ENCODE measurements at regions of chr1 and their contacts with region 1.

Region 1: GRCh38 chr1:1324521-1325287 is at the starts of genes CPTP and INTS11:
- DNase-seq: peak; percentile 89 to 98 (median 96)
- ATAC-seq: peak; percentile 86
- H3K4me3 ChIP-seq: peak within 1 kb of the TSS; percentile 60 to 77
- H3K4me3 Mint-ChIP-seq: peak within 1 kb of the TSS; percentile 89
- H3K27ac ChIP-seq: peak within 1 kb of the TSS; percentile 73
- H3K27ac Mint-ChIP-seq: peak within 1 kb of the TSS; percentile 89
- H3K4me1 ChIP-seq: peaks cover 35% of the 10 kb centered on the region
- H3K4me1 Mint-ChIP-seq: peaks cover 35% of the 10 kb centered on the region
- H3K27me3 ChIP-seq: no peaks in the 10 kb centered on the region
- H3K27me3 Mint-ChIP-seq: no peaks in the 10 kb centered on the region
- CTCF ChIP-seq: no peak
- total RNA-seq, gene CPTP: 7.3 to 7.9 TPM
- total RNA-seq, gene INTS11: 139 to 156 TPM

Region 2: DNA sequence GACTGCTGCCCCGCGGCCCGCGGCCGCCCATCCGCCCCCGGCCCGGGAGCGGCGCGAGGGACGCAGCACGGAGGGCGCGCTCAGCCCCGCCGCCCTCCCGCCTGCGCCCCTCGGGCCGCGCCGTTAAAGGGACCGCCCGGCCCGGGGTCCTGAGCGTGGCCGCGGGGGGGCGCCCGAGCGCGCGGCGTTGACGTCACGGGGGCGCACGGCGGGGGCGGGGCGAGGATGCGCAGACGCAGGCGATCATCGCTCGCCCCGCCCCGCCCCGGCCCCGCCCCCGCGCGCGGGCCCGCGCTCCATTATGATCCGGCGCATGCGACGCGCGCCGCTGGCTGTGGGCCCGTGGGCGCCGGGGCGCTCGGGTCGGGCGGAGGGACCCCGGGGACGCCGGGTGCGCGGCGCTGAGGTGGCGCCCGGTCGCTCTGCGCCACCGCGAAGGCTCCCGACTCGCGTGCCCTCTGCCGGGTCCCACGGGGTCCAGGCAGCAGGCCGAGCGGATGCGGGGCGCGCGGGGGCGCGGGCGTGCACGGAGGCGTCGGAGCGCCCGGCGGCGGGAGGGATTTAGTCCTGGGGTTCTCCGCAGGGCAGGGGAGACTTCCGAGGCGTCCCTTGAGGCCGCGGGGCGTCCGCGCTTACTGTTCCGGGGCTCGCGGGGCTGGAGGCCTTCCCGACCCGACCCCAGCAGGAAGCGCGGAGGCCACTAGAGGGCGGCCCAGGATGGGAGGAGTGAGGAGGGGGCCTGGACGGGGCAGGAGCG is 24.7 kb after region 1 on chr1 and contains the start of gene DVL1:
- CTCF ChIA-PET with region 1: interaction called, 3 read pairs
- POLR2A ChIA-PET with region 1: no interaction called
- intact Hi-C with region 1: loop called (anchors 1 kb)
- DNase-seq: peak; percentile 50 to 86 (median 72)
- ATAC-seq: peak; percentile 84
- H3K4me3 ChIP-seq: peak within 1 kb of the TSS; percentile 57 to 63
- H3K4me3 Mint-ChIP-seq: peak within 1 kb of the TSS; percentile 76
- H3K27ac ChIP-seq: peak within 1 kb of the TSS; percentile 46 to 72
- H3K27ac Mint-ChIP-seq: peak within 1 kb of the TSS; percentile 41
- H3K4me1 ChIP-seq: peaks cover 27% of the 10 kb centered on the region
- H3K4me1 Mint-ChIP-seq: peaks cover 29% of the 10 kb centered on the region
- H3K27me3 ChIP-seq: peaks cover 0 to 16% of the 10 kb centered on the region in 2 experiments
- H3K27me3 Mint-ChIP-seq: peaks cover 8% of the 10 kb centered on the region
- CTCF ChIP-seq: peak; percentile 43
- total RNA-seq, gene DVL1: 44.5 to 45.5 TPM

Region 3: GRCh38 chr1:1361982-1362423 is 37.3 kb after region 1 on chr1:
- CTCF ChIA-PET with region 1: no interaction called
- POLR2A ChIA-PET with region 1: no interaction called
- intact Hi-C with region 1: no loop called
- DNase-seq: no peak
- ATAC-seq: no peak
- H3K4me3 ChIP-seq: no peak overlapping the region
- H3K4me3 Mint-ChIP-seq: no peak overlapping the region
- H3K27ac ChIP-seq: no peak overlapping the region
- H3K27ac Mint-ChIP-seq: no peak overlapping the region
- H3K4me1 ChIP-seq: peaks cover 27% of the 10 kb centered on the region
- H3K4me1 Mint-ChIP-seq: peaks cover 24% of the 10 kb centered on the region
- H3K27me3 ChIP-seq: peaks cover 0 to 16% of the 10 kb centered on the region in 2 experiments
- H3K27me3 Mint-ChIP-seq: peaks cover 6% of the 10 kb centered on the region
- CTCF ChIP-seq: no peak

Region 4: DNA sequence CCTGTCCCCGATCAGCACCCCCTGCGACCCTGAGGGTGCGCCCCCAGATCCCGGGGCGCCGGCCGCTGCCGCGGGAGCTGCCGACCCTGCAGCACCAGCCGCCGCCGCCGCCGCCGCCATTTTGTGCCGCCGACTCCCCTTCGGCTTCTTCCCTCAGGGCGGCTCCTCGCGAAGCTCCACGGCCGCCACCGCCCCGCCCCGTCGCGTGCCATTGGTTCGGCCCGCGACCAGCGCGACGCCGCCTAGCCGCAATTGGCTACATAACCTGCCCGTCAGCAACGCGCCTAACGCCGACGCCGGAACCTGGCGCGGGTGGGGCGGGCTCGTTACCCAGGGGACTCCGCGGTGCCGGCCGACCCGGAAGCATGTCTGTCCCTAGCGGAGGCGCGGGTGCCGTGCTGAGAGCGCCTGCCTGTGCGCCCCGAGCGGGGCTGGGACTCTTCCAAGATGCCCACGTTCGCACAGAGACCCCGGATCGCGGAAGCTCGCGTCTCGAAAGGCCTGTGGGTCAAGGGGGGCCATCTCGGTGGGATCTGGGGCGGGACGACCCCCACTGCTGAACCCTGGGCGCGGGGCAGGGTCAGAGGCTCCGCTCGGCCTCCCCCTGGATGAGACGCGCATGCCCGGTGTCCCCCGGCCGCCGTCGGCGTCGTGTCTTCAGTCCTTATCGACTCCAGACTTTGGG is 74.6 kb after region 1 on chr1 and contains the start of gene CCNL2:
- CTCF ChIA-PET with region 1: no interaction called
- POLR2A ChIA-PET with region 1: no interaction called
- intact Hi-C with region 1: no loop called
- DNase-seq: peak; percentile 99 to 100 (median 99)
- ATAC-seq: peak; percentile 95
- H3K4me3 ChIP-seq: peak within 1 kb of the TSS; percentile 92 to 96
- H3K4me3 Mint-ChIP-seq: peak within 1 kb of the TSS; percentile 89
- H3K27ac ChIP-seq: peak within 1 kb of the TSS; percentile 81 to 92
- H3K27ac Mint-ChIP-seq: peak within 1 kb of the TSS; percentile 89
- H3K4me1 ChIP-seq: peaks cover 30% of the 10 kb centered on the region
- H3K4me1 Mint-ChIP-seq: peaks cover 45% of the 10 kb centered on the region
- H3K27me3 ChIP-seq: no peaks in the 10 kb centered on the region
- H3K27me3 Mint-ChIP-seq: no peaks in the 10 kb centered on the region
- CTCF ChIP-seq: peak; percentile 55
- total RNA-seq, gene CCNL2: 307 to 328 TPM